CD4-positive, alpha-beta T cell (primary cell): ENCODE measurements at regions of chr16 and their contacts with region 1.

Region 1: DNA sequence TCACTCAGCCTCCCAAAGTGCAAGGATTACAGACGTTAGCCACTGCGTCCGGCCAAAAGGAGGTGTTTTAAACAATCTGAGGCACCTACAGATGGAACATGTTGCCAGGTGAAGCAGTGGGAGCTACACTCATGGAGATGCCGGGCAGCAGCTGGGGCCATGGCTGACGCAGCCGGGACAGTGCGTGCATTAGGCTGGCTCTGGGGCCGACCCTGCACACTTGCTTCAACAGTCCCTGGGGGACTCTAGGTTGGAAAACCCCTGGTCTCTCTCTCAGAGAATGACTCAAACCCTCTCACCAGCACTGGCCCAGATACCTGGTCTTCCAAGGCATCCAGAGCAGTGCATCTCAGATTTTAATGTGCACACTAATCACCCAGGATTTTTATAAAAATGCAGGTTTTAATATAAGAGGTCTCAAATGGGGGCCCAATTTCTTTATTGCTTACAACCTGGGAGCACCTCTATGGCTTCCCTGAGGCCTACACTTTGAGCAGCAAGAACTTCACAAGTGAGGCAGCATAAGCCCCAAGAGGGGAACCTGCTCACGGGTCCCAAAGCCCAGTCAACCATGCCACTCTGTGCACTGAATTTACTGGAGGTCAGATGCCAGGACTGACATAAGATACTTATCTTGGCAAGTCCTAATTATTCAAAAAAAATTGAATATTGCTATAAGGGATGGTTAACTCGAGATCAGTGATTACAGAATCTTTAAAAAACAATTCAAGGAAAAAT is 70.8 kb upstream of the TRAP1 start:
- DNase-seq: no peak
- ATAC-seq: no peak
- H3K4me3 ChIP-seq: no peak overlapping the region
- H3K4me3 Mint-ChIP-seq: no peak overlapping the region
- H3K27ac ChIP-seq: no peak overlapping the region
- H3K27ac Mint-ChIP-seq: no peak overlapping the region
- H3K4me1 ChIP-seq: peaks cover 39% of the 10 kb centered on the region
- H3K4me1 Mint-ChIP-seq: peaks cover 67% of the 10 kb centered on the region
- H3K27me3 ChIP-seq: no peaks in the 10 kb centered on the region
- H3K27me3 Mint-ChIP-seq: no peaks in the 10 kb centered on the region
- CTCF ChIP-seq: no peak

Region 2: DNA sequence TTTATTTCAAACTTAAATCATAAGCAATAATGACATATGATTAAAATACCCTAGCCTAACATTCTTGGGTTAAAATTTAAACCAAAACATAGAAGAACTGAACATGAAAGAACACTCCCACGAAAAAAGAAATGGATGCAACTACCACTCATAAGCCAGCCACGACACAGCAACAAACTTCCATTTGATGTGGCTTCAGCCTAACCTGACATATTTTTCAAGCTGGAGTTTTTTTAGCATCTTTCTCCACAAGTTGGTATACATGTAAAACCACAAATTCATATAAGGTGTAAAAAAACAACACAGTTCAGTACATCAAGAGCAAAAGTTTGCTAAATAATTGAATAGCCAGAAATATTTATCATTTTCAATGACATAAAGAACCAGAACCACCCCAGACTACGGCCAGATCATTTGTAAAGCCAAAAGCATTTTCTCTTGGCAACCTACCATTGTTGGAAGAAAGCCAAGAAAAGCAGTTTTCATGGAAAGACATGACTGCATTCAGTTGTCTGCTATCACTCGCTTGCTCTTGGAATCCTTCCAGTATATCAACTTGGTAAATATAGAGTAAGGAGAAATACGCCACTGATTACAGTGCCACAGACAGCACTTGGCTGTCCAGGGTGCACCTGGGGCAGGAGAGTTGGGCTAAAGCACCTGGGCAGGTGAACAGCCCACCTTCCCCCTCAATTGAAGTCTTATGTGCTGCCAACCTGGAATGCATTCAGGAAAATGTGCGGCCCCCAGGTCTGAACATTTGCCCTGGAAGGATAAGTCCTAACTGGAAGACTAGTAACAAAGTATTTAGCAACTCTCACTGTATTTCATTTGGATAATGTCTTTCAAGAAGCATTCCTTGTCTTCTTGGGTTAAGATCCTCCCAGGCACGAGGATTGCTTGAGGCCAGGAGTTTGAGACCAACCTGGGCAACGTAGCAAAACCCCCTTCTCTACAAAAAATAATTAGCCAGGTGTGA is 31.9 kb after region 1 on chr16:
- CTCF ChIA-PET with region 1: no interaction called
- POLR2A ChIA-PET with region 1: interaction called, 4 read pairs
- intact Hi-C with region 1: loop called in 1 of 2 experiments (anchors 5 kb)
- DNase-seq: peak in 4 of 14 experiments; percentile 5 to 68 (median 58)
- ATAC-seq: peak; percentile 67
- H3K4me3 ChIP-seq: no peak overlapping the region
- H3K4me3 Mint-ChIP-seq: peak overlapping the region; percentile 71
- H3K27ac ChIP-seq: no peak overlapping the region
- H3K27ac Mint-ChIP-seq: peak overlapping the region; percentile 20
- H3K4me1 ChIP-seq: peaks cover 84% of the 10 kb centered on the region
- H3K4me1 Mint-ChIP-seq: peaks cover 93% of the 10 kb centered on the region
- H3K27me3 ChIP-seq: no peaks in the 10 kb centered on the region
- H3K27me3 Mint-ChIP-seq: no peaks in the 10 kb centered on the region
- CTCF ChIP-seq: no peak

Region 3: DNA sequence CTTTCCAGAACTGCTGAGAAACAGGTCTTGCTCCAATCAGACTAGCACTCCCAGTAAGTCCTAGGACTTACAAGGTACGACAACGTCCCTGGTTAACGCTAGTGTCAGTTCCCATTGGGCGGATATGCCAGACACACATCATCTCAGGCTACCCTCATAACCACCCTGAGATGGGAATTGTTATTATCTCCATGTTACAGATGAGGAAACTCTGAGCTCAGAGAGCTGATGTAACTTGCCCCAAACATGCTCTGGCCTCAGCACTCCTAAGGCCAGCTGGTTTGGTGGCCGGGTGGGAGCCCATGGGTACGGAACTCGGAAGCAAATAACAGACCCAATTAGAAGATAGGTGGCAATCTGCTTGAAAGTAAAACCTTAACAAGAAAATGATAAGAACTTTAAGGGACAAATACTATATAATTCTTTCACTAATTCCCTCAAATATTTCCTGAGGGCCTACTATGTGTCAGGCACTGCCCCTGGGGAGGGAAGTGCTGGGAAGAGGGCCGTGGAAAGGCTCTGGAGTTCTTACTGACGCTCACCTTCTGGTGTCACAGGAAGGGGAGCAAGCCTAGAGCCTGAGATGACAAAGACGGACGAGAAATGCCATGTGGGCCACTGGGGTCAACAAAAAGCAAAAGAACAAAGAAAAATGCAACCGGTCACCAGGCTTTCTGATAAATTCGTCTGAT is 85.5 kb after region 1 on chr16:
- CTCF ChIA-PET with region 1: no interaction called
- POLR2A ChIA-PET with region 1: interaction called, 4 read pairs
- intact Hi-C with region 1: loop called (anchors 5 kb)
- DNase-seq: no peak
- ATAC-seq: no peak
- H3K4me3 ChIP-seq: no peak overlapping the region
- H3K4me3 Mint-ChIP-seq: peak overlapping the region; percentile 66
- H3K27ac ChIP-seq: no peak overlapping the region
- H3K27ac Mint-ChIP-seq: peak overlapping the region; percentile 25
- H3K4me1 ChIP-seq: peaks cover 73% of the 10 kb centered on the region
- H3K4me1 Mint-ChIP-seq: peaks cover 100% of the 10 kb centered on the region
- H3K27me3 ChIP-seq: no peaks in the 10 kb centered on the region
- H3K27me3 Mint-ChIP-seq: no peaks in the 10 kb centered on the region
- CTCF ChIP-seq: no peak